ENCODE measurements at regions of chr2 and their contacts with region 1.

Region 1: DNA sequence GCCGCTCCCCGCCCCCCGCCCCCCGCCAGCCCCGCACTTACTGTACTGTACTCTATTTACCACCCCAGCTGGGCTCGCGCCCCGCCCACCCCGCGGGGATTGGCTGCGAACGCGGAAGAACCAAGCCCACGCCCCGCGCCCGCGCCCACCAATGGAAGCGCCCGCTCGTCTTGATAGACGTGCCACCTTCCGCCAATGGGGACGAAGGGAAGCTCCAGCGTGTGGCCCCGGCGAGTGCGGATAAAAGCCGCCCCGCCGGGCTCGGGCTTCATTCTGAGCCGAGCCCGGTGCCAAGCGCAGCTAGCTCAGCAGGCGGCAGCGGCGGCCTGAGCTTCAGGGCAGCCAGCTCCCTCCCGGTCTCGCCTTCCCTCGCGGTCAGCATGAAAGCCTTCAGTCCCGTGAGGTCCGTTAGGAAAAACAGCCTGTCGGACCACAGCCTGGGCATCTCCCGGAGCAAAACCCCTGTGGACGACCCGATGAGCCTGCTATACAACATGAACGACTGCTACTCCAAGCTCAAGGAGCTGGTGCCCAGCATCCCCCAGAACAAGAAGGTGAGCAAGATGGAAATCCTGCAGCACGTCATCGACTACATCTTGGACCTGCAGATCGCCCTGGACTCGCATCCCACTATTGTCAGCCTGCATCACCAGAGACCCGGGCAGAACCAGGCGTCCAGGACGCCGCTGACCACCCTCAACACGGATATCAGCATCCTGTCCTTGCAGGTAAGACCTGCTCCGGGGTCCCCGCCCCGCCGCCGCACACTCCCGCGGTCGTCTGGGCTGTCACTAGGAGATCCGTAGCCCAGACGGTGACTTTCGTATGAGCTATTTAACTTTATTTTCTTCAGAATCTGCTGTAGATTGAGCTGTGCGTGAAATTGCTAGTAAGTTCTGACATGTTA is at the start of gene ID2:
- DNase-seq: peak; percentile 99
- ATAC-seq: peak; percentile 73
- H3K4me3 Mint-ChIP-seq: peak within 1 kb of the TSS; percentile 98
- H3K27ac Mint-ChIP-seq: peak within 1 kb of the TSS; percentile 97
- H3K4me1 Mint-ChIP-seq: peaks cover 34% of the 10 kb centered on the region
- H3K27me3 Mint-ChIP-seq: peaks cover 10% of the 10 kb centered on the region
- total RNA-seq, gene ID2: 171 to 213 TPM

Region 2: DNA sequence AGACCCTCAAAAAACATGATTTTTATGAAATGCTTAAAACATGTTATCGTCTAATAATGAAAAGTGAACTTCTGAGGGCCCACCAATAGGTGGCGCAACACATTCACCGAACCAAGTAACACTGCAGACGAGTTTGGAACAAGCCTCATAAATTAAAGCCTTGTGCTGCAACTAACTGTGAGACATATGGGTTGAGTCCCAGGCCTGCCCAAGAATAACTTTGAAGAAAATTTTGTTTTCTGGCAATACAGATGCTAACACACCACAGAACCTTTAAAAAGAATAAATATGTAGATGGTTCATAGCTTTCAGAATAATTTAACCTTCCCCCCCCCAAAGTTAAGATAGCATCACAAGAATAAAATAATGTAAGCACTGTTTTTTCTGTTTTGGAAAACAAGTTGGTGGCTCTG is 1479.0 kb before region 1 on chr2:
- CTCF ChIA-PET with region 1: no interaction called
- POLR2A ChIA-PET with region 1: no interaction called
- intact Hi-C with region 1: loop called (anchors 1 to 2 kb)
- DNase-seq: peak; percentile 78
- ATAC-seq: peak; percentile 55
- H3K4me3 Mint-ChIP-seq: no peak overlapping the region
- H3K27ac Mint-ChIP-seq: no peak overlapping the region
- H3K4me1 Mint-ChIP-seq: peaks cover 1% of the 10 kb centered on the region
- H3K27me3 Mint-ChIP-seq: no peaks in the 10 kb centered on the region

Region 3: GRCh38 chr2:7825591-7826312 is 856.3 kb before region 1 on chr2:
- CTCF ChIA-PET with region 1: no interaction called
- POLR2A ChIA-PET with region 1: interaction called, 9 read pairs
- intact Hi-C with region 1: loop called (anchors 1 to 5 kb)
- DNase-seq: peak; percentile 86
- ATAC-seq: peak; percentile 95
- H3K4me3 Mint-ChIP-seq: peak overlapping the region; percentile 26
- H3K27ac Mint-ChIP-seq: peak overlapping the region; percentile 93
- H3K4me1 Mint-ChIP-seq: peaks cover 27% of the 10 kb centered on the region
- H3K27me3 Mint-ChIP-seq: peaks cover 3% of the 10 kb centered on the region

Region 4: DNA sequence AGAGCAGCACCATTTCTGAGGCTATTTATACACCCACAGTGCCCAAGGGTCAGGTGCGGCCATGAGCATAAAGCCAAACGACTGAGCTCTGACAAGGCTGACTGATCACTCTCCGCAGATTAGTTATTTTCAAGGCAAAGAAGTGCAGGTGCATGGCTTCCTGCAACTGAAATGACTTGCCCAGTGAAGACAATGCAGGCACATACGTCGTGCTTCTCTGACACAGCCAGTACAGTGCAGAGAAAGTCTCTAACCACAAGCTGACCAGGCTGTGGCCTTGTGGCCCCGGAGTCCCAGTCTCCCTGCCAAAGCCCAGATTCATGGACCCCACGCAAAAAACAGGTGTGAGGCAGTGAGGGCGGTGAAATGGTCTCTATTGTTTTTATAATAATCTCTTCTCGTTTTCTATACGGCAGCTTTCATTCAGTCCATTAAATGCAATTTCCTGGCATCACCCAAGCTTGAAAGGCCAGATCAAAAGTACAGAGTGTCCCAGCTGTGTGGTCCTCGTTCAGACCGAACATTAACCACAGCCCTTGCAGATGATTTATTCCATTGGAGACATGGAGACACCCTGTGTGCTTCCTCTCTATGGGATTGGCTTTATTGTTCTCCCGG is 447.2 kb before region 1 on chr2:
- CTCF ChIA-PET with region 1: interaction called, 3 read pairs
- POLR2A ChIA-PET with region 1: interaction called, 4 read pairs
- intact Hi-C with region 1: loop called (anchors 5 to 10 kb)
- DNase-seq: no peak
- ATAC-seq: no peak
- H3K4me3 Mint-ChIP-seq: no peak overlapping the region
- H3K27ac Mint-ChIP-seq: no peak overlapping the region
- H3K4me1 Mint-ChIP-seq: peaks cover 19% of the 10 kb centered on the region
- H3K27me3 Mint-ChIP-seq: peaks cover 20% of the 10 kb centered on the region

Region 5: GRCh38 chr2:8514796-8515758 is 167.0 kb before region 1 on chr2:
- CTCF ChIA-PET with region 1: interaction called, 4 read pairs
- POLR2A ChIA-PET with region 1: interaction called, 39 read pairs
- intact Hi-C with region 1: loop called (anchors 1 kb)
- DNase-seq: peak; percentile 82
- ATAC-seq: peak; percentile 86
- H3K4me3 Mint-ChIP-seq: peak overlapping the region; percentile 46
- H3K27ac Mint-ChIP-seq: peak overlapping the region; percentile 93
- H3K4me1 Mint-ChIP-seq: peaks cover 63% of the 10 kb centered on the region
- H3K27me3 Mint-ChIP-seq: no peaks in the 10 kb centered on the region

Region 6: DNA sequence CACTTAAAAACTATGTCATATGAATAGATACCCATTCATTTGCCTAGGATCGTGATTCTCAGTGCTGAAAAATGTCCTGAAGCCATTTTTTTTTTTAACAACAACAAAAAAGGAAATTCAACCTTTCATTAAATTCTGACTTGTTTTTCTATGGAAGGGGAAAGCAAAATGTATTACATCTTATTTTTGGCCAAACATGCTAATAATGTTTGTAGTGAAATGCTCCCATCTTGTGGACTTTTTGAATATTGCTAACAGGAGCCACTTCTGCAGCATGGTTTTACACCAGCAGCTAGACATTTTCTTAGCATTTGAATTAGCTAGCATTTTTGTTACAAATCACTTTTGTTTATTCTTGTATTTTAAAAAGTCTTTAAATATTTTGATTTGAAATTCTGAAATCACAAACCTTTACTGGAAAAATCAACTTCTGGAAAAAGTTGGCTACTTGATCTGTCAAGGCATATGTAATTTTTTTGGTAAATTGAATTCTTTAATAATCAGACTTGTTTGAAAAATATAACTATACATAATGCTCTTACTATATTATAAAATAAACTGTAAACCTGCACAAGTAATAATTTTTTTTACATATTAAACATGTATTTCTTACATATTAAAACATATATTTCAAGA is 79.6 kb after region 1 on chr2:
- CTCF ChIA-PET with region 1: no interaction called
- POLR2A ChIA-PET with region 1: no interaction called
- intact Hi-C with region 1: no loop called
- DNase-seq: no peak
- ATAC-seq: no peak
- H3K4me3 Mint-ChIP-seq: no peak overlapping the region
- H3K27ac Mint-ChIP-seq: no peak overlapping the region
- H3K4me1 Mint-ChIP-seq: no peaks in the 10 kb centered on the region
- H3K27me3 Mint-ChIP-seq: no peaks in the 10 kb centered on the region

Region 7: DNA sequence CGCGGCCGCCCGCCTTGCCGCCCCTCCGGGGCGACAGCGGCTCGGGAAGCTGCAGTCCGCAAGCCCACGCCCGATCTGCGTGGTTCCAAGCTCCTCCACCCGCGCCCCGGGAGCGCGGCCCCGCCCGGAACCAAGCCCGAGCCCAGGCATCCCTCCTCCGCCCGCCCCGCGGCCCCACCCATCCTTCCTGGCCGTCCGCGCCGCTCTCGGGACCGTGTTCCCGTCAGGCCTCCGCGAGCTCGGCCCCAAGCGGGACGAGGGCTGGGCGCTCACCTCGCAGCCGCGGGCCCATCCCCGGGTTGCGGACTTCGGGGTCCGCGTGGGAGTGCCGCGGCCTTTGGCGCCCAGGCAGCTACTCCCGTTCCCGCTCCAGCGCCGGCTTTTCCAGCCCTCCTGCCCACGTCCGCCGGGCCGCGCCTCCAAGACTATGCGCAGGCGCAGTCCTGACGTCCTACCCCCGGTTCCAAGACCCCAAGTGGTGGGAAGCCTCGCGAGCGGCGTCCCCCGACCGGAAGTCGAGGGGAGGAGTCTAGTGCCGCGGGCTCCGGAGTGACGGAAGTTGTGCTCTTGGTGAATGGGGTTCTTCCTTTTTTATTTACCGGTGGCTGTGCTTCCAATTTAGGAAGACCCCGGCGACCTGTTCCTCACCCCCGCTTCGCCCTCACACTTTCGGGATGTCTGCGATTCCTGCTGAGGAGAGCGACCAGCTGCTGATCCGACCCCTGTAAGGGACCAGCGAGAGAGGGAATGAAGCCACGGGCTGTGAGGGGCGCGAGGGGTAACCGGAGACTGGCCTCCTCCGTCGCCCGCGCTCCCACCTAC is 741.3 kb after region 1 on chr2 and contains the starts of genes CPSF3 and ITGB1BP1:
- CTCF ChIA-PET with region 1: no interaction called
- POLR2A ChIA-PET with region 1: interaction called, 3 read pairs
- intact Hi-C with region 1: loop called in 1 of 2 experiments (anchors 2 kb)
- DNase-seq: peak; percentile 99
- ATAC-seq: peak; percentile 89
- H3K4me3 Mint-ChIP-seq: no peak within 1 kb of the TSS
- H3K27ac Mint-ChIP-seq: peak within 1 kb of the TSS; percentile 94
- H3K4me1 Mint-ChIP-seq: peaks cover 36% of the 10 kb centered on the region
- H3K27me3 Mint-ChIP-seq: no peaks in the 10 kb centered on the region
- total RNA-seq, gene CPSF3: 72.3 to 103 TPM
- total RNA-seq, gene ITGB1BP1: 89.7 to 92.1 TPM

Region 8: DNA sequence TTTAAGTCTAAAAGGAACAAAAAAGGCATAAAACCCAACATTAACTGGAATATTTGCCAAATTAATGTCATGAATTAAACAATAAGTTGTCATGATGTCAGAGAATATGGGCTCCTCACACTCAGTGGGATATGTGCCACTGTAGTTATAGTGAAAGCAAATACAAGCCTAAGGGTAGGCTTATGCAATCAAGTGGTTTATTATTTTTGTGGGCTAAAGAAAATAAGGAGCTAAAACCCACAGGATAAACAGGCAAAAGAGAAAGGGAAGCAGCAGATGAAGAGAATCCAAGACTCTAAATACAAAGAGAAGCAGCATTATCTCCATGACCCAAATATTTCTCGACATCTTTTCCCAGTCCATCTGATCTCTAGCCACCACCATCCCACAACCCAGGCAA is 931.3 kb after region 1 on chr2:
- CTCF ChIA-PET with region 1: no interaction called
- POLR2A ChIA-PET with region 1: no interaction called
- intact Hi-C with region 1: no loop called
- DNase-seq: no peak
- ATAC-seq: no peak
- H3K4me3 Mint-ChIP-seq: no peak overlapping the region
- H3K27ac Mint-ChIP-seq: peak overlapping the region; percentile 27
- H3K4me1 Mint-ChIP-seq: peaks cover 95% of the 10 kb centered on the region
- H3K27me3 Mint-ChIP-seq: no peaks in the 10 kb centered on the region